HepG2 (cell line): ENCODE measurements at regions of chr2 and their contacts with region 1.

Region 1: GRCh38 chr2:137964066-137964858 is at the start of gene HNMT:
- DNase-seq: peak; percentile 100
- ATAC-seq: peak; percentile 96
- H3K4me3 ChIP-seq: peak within 1 kb of the TSS; percentile 66 to 85 (median 82)
- H3K27ac ChIP-seq: peak within 1 kb of the TSS; percentile 100
- H3K4me1 ChIP-seq: peaks cover 64% of the 10 kb centered on the region
- H3K27me3 ChIP-seq: no peaks in the 10 kb centered on the region; a peak in 2 of 5 replicates
- CTCF ChIP-seq: no peak
- EP300 ChIP-seq: peak; percentile 99 to 100
- POLR2A ChIP-seq: peak; percentile 98 to 99
- RAD21 ChIP-seq: peak; percentile 67
- total RNA-seq, gene HNMT: 309 and 372 TPM in 2 replicates

Region 2: DNA sequence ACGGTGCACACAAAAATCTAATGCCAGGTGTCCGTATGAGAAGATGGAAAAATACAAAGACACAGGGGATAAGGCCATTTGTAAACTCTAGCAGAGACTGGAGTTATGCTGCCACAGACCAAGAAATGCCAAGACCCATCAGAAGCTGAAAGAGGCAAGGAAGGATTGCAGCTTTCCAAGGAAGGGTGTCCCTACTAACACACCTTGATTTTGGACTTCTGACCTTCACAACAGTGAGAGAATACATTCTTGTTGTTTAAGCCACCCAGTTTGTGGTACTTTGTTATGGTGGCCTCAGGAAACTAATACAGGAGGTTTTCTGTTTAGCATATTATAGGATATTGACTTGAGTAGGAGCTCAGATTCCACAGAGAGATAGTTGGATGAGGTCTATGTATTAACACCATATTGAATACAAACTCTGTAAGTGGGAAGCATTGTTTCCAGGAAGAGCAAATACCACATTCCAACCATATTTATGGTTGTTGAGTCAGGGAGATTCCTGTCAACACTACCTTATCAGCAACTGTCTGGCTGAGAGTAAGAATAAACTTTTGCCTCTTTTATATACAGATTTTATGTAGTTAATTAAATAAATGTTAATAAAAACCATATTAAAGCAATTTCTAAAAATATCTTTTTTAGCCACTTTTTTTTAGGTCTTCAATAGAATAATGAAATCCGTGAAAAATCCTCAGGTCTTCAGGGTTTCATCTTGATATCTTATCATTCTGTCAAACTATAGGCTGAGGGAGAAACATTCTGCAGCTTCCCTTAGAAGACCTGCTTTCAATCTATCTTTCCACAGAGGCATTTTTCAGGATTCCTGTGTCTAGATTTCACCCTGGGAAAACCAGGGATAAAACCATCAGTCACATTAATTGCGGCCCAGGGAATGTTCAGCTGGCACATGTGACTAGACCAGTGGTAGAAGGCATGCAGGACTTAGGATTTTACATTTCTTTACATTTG is 35.4 kb before region 1 on chr2:
- CTCF ChIA-PET with region 1: no interaction called
- POLR2A ChIA-PET with region 1: interaction called, 81 read pairs
- in situ Hi-C with region 1: no loop called
- intact Hi-C with region 1: loop called (anchors 1 kb)
- DNase-seq: peak; percentile 98
- ATAC-seq: peak; percentile 96
- H3K4me3 ChIP-seq: peak overlapping the region in 1 of 3 experiments; percentile 26; a peak in 1 of 6 replicates
- H3K27ac ChIP-seq: peak overlapping the region; percentile 81
- H3K4me1 ChIP-seq: peaks cover 78% of the 10 kb centered on the region
- H3K27me3 ChIP-seq: no peaks in the 10 kb centered on the region
- CTCF ChIP-seq: no peak
- EP300 ChIP-seq: peak; percentile 56 to 96; a peak in 3 of 4 replicates
- POLR2A ChIP-seq: no peak
- RAD21 ChIP-seq: no peak

Region 3: DNA sequence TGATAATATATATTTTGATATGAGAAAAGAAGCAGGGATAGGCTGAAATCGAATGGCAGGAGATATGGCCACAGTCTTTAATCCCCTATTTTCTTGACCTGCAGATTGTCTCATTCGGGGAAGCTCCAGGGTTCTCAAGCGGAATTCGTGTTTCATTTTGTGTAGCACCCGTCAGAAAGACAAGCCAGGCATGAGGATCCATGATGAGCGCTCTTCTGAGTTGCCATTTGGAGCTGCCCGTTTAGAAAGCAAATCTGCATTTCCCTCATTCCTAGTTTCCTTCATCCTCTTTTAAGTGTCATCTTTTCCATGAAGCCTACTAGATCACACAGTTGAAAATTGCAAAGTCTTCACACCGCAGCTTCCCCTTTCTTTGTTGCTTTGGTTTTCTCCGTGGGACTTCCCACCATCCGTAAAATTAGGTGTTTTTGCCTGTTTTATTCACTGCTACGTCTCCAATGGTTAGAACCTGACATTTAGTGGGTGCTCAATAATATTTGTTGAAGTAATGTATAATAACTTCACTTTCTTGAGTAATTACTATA is 16.9 kb after region 1 on chr2:
- CTCF ChIA-PET with region 1: no interaction called
- POLR2A ChIA-PET with region 1: interaction called, 145 read pairs
- in situ Hi-C with region 1: no loop called
- intact Hi-C with region 1: no loop called
- DNase-seq: no peak
- ATAC-seq: no peak
- H3K4me3 ChIP-seq: no peak overlapping the region
- H3K27ac ChIP-seq: no peak overlapping the region
- H3K4me1 ChIP-seq: peaks cover 55% of the 10 kb centered on the region
- H3K27me3 ChIP-seq: no peaks in the 10 kb centered on the region
- CTCF ChIP-seq: no peak
- EP300 ChIP-seq: no peak
- POLR2A ChIP-seq: peak in 1 of 2 experiments; percentile 37; a peak in 1 of 4 replicates
- RAD21 ChIP-seq: no peak

Region 4: GRCh38 chr2:138032334-138032733 is 68.1 kb after region 1 on chr2:
- CTCF ChIA-PET with region 1: no interaction called
- POLR2A ChIA-PET with region 1: interaction called, 14 read pairs
- in situ Hi-C with region 1: no loop called
- intact Hi-C with region 1: no loop called
- DNase-seq: peak; percentile 64
- ATAC-seq: peak; percentile 79
- H3K4me3 ChIP-seq: no peak overlapping the region
- H3K27ac ChIP-seq: no peak overlapping the region
- H3K4me1 ChIP-seq: peaks cover 22% of the 10 kb centered on the region
- H3K27me3 ChIP-seq: peaks cover 0 to 6% of the 10 kb centered on the region in 2 experiments; a peak in 1 of 5 replicates
- CTCF ChIP-seq: no peak
- EP300 ChIP-seq: peak in 1 of 2 experiments; percentile 36; a peak in 1 of 4 replicates
- POLR2A ChIP-seq: no peak
- RAD21 ChIP-seq: no peak

Region 5: DNA sequence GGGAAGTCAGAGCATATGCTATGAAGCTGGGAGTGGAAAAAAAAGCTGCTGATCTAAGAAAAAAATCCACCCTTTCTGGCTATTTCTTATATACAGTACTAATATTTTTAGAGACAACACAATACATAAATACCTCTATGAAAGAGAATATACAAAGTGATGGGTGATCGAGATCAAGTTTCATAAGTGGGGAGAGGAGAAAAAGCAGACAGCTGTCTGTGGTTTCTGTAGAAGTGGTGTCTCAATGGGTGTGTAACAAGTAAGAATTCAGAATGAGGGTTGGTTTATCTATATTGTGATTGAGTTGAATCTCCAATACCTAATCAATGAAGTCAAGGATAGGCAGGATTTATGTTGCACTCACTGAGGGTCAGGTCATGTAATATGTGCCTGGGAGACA is 191.0 kb after region 1 on chr2:
- CTCF ChIA-PET with region 1: no interaction called
- POLR2A ChIA-PET with region 1: no interaction called
- in situ Hi-C with region 1: no loop called
- intact Hi-C with region 1: no loop called
- DNase-seq: no peak
- ATAC-seq: no peak
- H3K4me3 ChIP-seq: no peak overlapping the region
- H3K27ac ChIP-seq: no peak overlapping the region
- H3K4me1 ChIP-seq: no peaks in the 10 kb centered on the region
- H3K27me3 ChIP-seq: no peaks in the 10 kb centered on the region
- CTCF ChIP-seq: no peak
- EP300 ChIP-seq: no peak
- POLR2A ChIP-seq: no peak
- RAD21 ChIP-seq: no peak

Region 6: GRCh38 chr2:138364554-138365162 is 400.4 kb after region 1 on chr2:
- CTCF ChIA-PET with region 1: no interaction called
- POLR2A ChIA-PET with region 1: no interaction called
- in situ Hi-C with region 1: no loop called
- intact Hi-C with region 1: no loop called
- DNase-seq: no peak
- ATAC-seq: no peak
- H3K4me3 ChIP-seq: no peak overlapping the region
- H3K27ac ChIP-seq: no peak overlapping the region
- H3K4me1 ChIP-seq: peaks cover 5% of the 10 kb centered on the region; the same call in 1 of the 2 replicates
- H3K27me3 ChIP-seq: no peaks in the 10 kb centered on the region
- CTCF ChIP-seq: no peak
- EP300 ChIP-seq: no peak
- POLR2A ChIP-seq: no peak
- RAD21 ChIP-seq: no peak

Region 7: DNA sequence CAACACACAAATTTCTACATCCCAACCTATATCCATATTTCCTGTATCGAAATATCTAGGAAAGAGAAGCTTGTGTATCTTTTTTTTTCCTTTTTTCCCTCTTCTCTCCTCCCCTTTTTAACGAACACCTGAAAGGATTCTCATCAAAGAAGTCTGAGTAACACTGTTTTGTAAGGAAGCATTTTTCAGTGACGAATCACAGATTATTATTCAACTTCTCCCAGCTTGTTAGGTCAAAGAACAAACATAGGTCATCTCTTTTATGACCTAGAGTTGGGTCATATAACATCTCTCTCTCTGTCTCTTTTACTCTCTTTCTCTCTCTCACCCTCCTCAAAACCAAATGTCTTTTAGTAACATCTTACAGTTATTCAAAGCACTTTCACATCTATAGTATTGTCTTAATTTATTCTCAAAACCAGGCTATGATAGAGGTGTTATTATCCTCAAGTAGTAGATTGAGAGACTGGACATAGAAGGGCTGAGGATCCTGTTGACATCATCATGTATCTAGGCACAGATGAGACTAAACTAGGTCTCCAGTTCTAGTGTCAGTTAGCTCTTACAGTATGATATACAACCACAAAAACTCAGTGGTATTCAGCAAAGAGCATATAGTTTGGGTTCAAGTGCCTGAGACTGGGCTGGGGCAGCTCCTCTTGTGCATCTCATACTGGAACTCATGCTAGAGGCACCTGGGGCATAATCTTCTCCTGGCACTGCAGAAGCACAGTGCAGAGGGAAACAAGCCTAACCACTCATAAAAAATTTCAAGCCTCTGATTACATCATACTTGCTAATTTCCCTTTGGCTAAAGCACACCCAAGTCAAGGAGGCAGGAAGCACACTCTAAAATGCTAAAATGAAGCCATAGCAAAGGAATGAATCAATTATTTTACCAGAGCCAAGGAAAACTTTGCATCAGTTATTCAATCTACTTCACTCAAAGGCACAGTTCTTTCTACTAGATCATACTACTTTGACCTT is 457.3 kb after region 1 on chr2:
- CTCF ChIA-PET with region 1: no interaction called
- POLR2A ChIA-PET with region 1: interaction called, 27 read pairs
- in situ Hi-C with region 1: no loop called
- intact Hi-C with region 1: no loop called
- DNase-seq: peak; percentile 85
- ATAC-seq: peak; percentile 59
- H3K4me3 ChIP-seq: no peak overlapping the region
- H3K27ac ChIP-seq: peak overlapping the region; percentile 33
- H3K4me1 ChIP-seq: peaks cover 46% of the 10 kb centered on the region
- H3K27me3 ChIP-seq: no peaks in the 10 kb centered on the region
- CTCF ChIP-seq: no peak
- EP300 ChIP-seq: peak; percentile 21 to 84; a peak in 2 of 4 replicates
- POLR2A ChIP-seq: no peak
- RAD21 ChIP-seq: no peak